Activated T-helper 2 cell treated with anti-CD3 and anti-CD28 coated beads, Interferon-gamma antibody, Interleukin-2, Interleukin-4, amounts not matched to agents 10 μg/mL and 5 μg/mL and 100 μg/mL, durations not matched to agents 14 hours and 24 hours and 36 hours (primary cell): ENCODE measurements at regions of chr22 and their contacts with region 1.

Region 1: GRCh38 chr22:37077884-37078485 is 26.4 kb downstream of the KCTD17 start:
- DNase-seq: peak; percentile 71
- H3K4me3 Mint-ChIP-seq: peak overlapping the region; percentile 5
- H3K27ac Mint-ChIP-seq: peak overlapping the region; percentile 99
- H3K4me1 Mint-ChIP-seq: peaks cover 55% of the 10 kb centered on the region
- H3K27me3 Mint-ChIP-seq: no peaks in the 10 kb centered on the region

Region 2: GRCh38 chr22:37095113-37095512 is 17.1 kb after region 1 on chr22:
- intact Hi-C with region 1: loop called (anchors 1 kb)
- DNase-seq: no peak
- H3K4me3 Mint-ChIP-seq: no peak overlapping the region
- H3K27ac Mint-ChIP-seq: peak overlapping the region; percentile 72
- H3K4me1 Mint-ChIP-seq: peaks cover 25% of the 10 kb centered on the region
- H3K27me3 Mint-ChIP-seq: no peaks in the 10 kb centered on the region

Region 3: GRCh38 chr22:37121887-37122591 is 44.1 kb after region 1 on chr22:
- intact Hi-C with region 1: loop called (anchors 1 kb)
- DNase-seq: peak; percentile 92
- H3K4me3 Mint-ChIP-seq: peak overlapping the region; percentile 76
- H3K27ac Mint-ChIP-seq: peak overlapping the region; percentile 100
- H3K4me1 Mint-ChIP-seq: peaks cover 73% of the 10 kb centered on the region
- H3K27me3 Mint-ChIP-seq: no peaks in the 10 kb centered on the region

Region 4: DNA sequence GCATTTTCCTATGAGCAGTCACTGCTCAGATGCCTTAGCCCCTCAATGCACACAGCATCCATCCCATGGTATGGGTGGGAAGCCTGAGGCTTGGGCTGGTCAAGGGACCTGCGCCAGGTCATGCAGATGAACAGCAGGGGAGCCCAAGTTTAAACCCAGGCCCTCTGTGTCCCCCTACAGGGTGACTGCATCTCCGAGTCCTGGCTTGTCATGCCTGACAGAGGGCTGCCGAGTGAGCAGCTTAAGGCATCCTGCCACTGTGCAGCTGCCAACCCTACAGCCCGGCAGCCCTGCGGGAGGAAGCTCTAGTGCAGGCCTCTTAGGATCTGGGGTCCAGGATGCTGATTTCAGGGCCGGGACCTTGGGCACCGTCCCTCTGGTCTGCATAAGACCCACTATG is 61.8 kb after region 1 on chr22:
- intact Hi-C with region 1: loop called (anchors 1 kb)
- DNase-seq: no peak
- H3K4me3 Mint-ChIP-seq: no peak overlapping the region
- H3K27ac Mint-ChIP-seq: peak overlapping the region; percentile 97
- H3K4me1 Mint-ChIP-seq: peaks cover 49% of the 10 kb centered on the region
- H3K27me3 Mint-ChIP-seq: no peaks in the 10 kb centered on the region

Region 5: GRCh38 chr22:37148742-37149665 is 71.0 kb after region 1 on chr22:
- intact Hi-C with region 1: loop called (anchors 1 kb)
- DNase-seq: no peak
- H3K4me3 Mint-ChIP-seq: peak overlapping the region; percentile 92
- H3K27ac Mint-ChIP-seq: peak overlapping the region; percentile 94
- H3K4me1 Mint-ChIP-seq: peaks cover 46% of the 10 kb centered on the region
- H3K27me3 Mint-ChIP-seq: no peaks in the 10 kb centered on the region

Region 6: GRCh38 chr22:37166675-37167066 is 88.7 kb after region 1 on chr22:
- intact Hi-C with region 1: loop called (anchors 1 kb)
- DNase-seq: peak; percentile 75
- H3K4me3 Mint-ChIP-seq: peak overlapping the region; percentile 68
- H3K27ac Mint-ChIP-seq: peak overlapping the region; percentile 79
- H3K4me1 Mint-ChIP-seq: peaks cover 64% of the 10 kb centered on the region
- H3K27me3 Mint-ChIP-seq: no peaks in the 10 kb centered on the region

Region 7: GRCh38 chr22:37193629-37194191 is 115.7 kb after region 1 on chr22:
- intact Hi-C with region 1: loop called (anchors 1 kb)
- DNase-seq: peak; percentile 57
- H3K4me3 Mint-ChIP-seq: peak overlapping the region; percentile 33
- H3K27ac Mint-ChIP-seq: peak overlapping the region; percentile 81
- H3K4me1 Mint-ChIP-seq: peaks cover 54% of the 10 kb centered on the region
- H3K27me3 Mint-ChIP-seq: no peaks in the 10 kb centered on the region